ENCODE measurements at regions of chr12 and their contacts with region 1.

Region 1: GRCh38 chr12:62435303-62436163 is 31.1 kb upstream of the MON2 start:
- DNase-seq: peak; percentile 32
- H3K4me3 Mint-ChIP-seq: peak overlapping the region; percentile 71
- H3K27ac Mint-ChIP-seq: no peak overlapping the region
- H3K4me1 Mint-ChIP-seq: peaks cover 20% of the 10 kb centered on the region
- H3K27me3 Mint-ChIP-seq: peaks cover 21% of the 10 kb centered on the region
- CTCF ChIP-seq: no peak

Region 2: DNA sequence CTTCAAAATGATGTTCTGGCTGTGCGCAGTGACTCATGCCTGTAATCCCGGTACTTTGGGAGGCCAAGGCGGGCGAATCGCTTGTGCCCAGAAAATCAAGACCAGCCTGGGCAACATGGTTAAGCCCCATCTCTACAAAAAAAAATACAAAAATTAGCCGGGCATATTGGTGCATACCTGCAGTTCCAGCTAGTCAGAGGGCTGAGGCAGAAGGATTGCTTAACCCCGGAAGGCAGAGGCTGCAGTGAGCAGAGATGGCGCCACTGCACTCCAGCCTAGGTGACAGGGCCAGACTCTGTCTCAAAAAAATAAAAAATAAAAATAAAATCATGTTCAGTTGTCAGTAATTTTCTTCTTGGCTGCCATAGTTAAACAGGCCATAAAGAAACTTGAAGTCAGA is 421.2 kb before region 1 on chr12:
- CTCF ChIA-PET with region 1: no interaction called
- POLR2A ChIA-PET with region 1: no interaction called
- intact Hi-C with region 1: no loop called
- DNase-seq: no peak
- H3K4me3 Mint-ChIP-seq: no peak overlapping the region
- H3K27ac Mint-ChIP-seq: no peak overlapping the region
- H3K4me1 Mint-ChIP-seq: no peaks in the 10 kb centered on the region
- H3K27me3 Mint-ChIP-seq: no peaks in the 10 kb centered on the region
- CTCF ChIP-seq: no peak

Region 3: GRCh38 chr12:62128175-62128975 is 307.2 kb before region 1 on chr12:
- CTCF ChIA-PET with region 1: no interaction called
- POLR2A ChIA-PET with region 1: no interaction called
- intact Hi-C with region 1: no loop called
- DNase-seq: no peak
- H3K4me3 Mint-ChIP-seq: no peak overlapping the region
- H3K27ac Mint-ChIP-seq: no peak overlapping the region
- H3K4me1 Mint-ChIP-seq: no peaks in the 10 kb centered on the region
- H3K27me3 Mint-ChIP-seq: no peaks in the 10 kb centered on the region
- CTCF ChIP-seq: no peak

Region 4: DNA sequence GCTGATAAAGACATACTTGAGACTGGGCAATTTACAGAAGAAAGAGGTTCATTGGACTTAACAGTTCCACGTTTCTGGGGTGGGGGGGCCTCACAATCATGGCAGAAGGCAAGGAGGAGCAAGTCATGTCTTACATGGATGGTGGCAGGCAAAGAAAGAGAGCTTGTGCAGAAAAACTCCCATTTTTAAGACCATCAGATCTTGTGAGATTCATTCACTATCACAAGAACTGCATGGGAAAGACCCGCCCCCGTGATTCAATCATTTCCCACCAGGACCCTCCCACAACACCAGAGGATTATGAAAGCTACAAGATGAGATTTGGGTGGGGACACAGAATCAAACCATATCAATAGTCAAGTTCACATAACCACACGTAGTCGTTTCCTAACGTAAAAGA is 89.9 kb before region 1 on chr12:
- CTCF ChIA-PET with region 1: no interaction called
- POLR2A ChIA-PET with region 1: no interaction called
- intact Hi-C with region 1: no loop called
- DNase-seq: no peak
- H3K4me3 Mint-ChIP-seq: no peak overlapping the region
- H3K27ac Mint-ChIP-seq: no peak overlapping the region
- H3K4me1 Mint-ChIP-seq: no peaks in the 10 kb centered on the region
- H3K27me3 Mint-ChIP-seq: no peaks in the 10 kb centered on the region
- CTCF ChIP-seq: no peak

Region 5: GRCh38 chr12:62414180-62414579 is 21.4 kb before region 1 on chr12:
- CTCF ChIA-PET with region 1: interaction called, 14 read pairs
- POLR2A ChIA-PET with region 1: interaction called, 3 read pairs
- intact Hi-C with region 1: no loop called
- DNase-seq: no peak
- H3K4me3 Mint-ChIP-seq: no peak overlapping the region
- H3K27ac Mint-ChIP-seq: no peak overlapping the region
- H3K4me1 Mint-ChIP-seq: no peaks in the 10 kb centered on the region
- H3K27me3 Mint-ChIP-seq: no peaks in the 10 kb centered on the region
- CTCF ChIP-seq: no peak

Region 6: GRCh38 chr12:62466594-62467491 is 31.3 kb after region 1 on chr12 and contains the start of gene MON2:
- CTCF ChIA-PET with region 1: interaction called, 28 read pairs
- POLR2A ChIA-PET with region 1: interaction called, 6 read pairs
- intact Hi-C with region 1: no loop called
- DNase-seq: peak; percentile 85
- H3K4me3 Mint-ChIP-seq: peak within 1 kb of the TSS; percentile 81
- H3K27ac Mint-ChIP-seq: peak within 1 kb of the TSS; percentile 93
- H3K4me1 Mint-ChIP-seq: peaks cover 10% of the 10 kb centered on the region
- H3K27me3 Mint-ChIP-seq: no peaks in the 10 kb centered on the region
- CTCF ChIP-seq: no peak
- total RNA-seq, gene MON2: 49.5 and 57.4 TPM in 2 replicates

Region 7: GRCh38 chr12:62537551-62537950 is 102.0 kb after region 1 on chr12:
- CTCF ChIA-PET with region 1: interaction called, 12 read pairs
- POLR2A ChIA-PET with region 1: no interaction called
- intact Hi-C with region 1: no loop called
- DNase-seq: peak; percentile 80
- H3K4me3 Mint-ChIP-seq: no peak overlapping the region
- H3K27ac Mint-ChIP-seq: no peak overlapping the region
- H3K4me1 Mint-ChIP-seq: peaks cover 6% of the 10 kb centered on the region
- H3K27me3 Mint-ChIP-seq: no peaks in the 10 kb centered on the region
- CTCF ChIP-seq: no peak

Region 8: GRCh38 chr12:62640910-62641448 is 205.4 kb after region 1 on chr12:
- CTCF ChIA-PET with region 1: no interaction called
- POLR2A ChIA-PET with region 1: no interaction called
- intact Hi-C with region 1: no loop called
- DNase-seq: no peak
- H3K4me3 Mint-ChIP-seq: no peak overlapping the region
- H3K27ac Mint-ChIP-seq: no peak overlapping the region
- H3K4me1 Mint-ChIP-seq: peaks cover 7% of the 10 kb centered on the region
- H3K27me3 Mint-ChIP-seq: no peaks in the 10 kb centered on the region
- CTCF ChIP-seq: no peak

Region 9: DNA sequence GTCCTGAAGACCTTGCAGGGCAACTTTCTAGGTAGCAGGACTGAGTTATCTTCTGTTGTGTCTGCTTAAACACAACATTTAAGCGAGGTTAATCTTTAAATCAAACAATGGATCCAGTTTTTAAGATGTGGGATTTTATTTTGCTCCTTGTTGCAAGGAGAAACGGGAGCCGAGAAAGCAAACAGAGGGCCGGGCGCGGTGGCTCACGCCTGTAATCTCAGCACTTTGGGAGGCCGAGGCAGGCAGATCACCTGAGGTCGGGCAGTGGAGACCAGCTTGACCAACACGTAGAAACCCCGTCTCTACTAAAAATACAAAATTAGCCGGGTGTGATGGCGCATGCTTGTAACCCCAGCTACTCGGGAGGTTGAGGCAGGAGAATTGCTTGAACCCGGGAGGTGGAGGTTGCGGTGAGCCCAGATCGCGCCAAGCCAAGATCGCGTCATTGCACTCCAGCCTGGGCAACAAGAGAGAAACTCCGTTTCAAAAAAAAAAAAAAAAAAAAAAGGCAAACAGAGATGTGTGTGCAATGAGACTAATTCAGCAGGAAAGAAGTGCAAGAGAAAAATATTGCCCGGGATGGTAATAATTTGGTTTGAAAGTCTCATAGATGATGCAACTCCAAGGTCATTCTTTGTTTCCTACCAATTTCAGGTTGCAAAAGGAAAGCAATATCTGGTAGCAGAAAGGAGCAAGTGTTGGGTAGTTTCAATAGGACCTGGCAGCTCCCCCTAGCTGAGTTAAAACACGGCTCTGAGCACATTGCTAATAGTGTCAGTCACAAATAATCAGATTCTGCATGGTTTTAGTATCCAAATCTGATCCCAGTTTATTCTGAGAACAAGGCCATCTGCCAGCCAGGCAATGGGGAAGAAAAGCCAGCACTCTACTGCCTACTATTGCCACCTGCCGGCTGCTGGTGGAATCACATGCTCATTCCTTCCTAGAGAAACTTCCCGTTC is 358.0 kb after region 1 on chr12:
- CTCF ChIA-PET with region 1: interaction called, 96 read pairs
- POLR2A ChIA-PET with region 1: interaction called, 3 read pairs
- intact Hi-C with region 1: loop called (anchors 1 kb)
- DNase-seq: peak; percentile 88
- H3K4me3 Mint-ChIP-seq: no peak overlapping the region
- H3K27ac Mint-ChIP-seq: no peak overlapping the region
- H3K4me1 Mint-ChIP-seq: no peaks in the 10 kb centered on the region
- H3K27me3 Mint-ChIP-seq: no peaks in the 10 kb centered on the region
- CTCF ChIP-seq: peak; percentile 91

Region 10: GRCh38 chr12:62813031-62813829 is 377.7 kb after region 1 on chr12:
- CTCF ChIA-PET with region 1: interaction called, 24 read pairs
- POLR2A ChIA-PET with region 1: interaction called, 3 read pairs
- intact Hi-C with region 1: loop called (anchors 1 kb)
- DNase-seq: peak; percentile 76
- H3K4me3 Mint-ChIP-seq: no peak overlapping the region
- H3K27ac Mint-ChIP-seq: no peak overlapping the region
- H3K4me1 Mint-ChIP-seq: peaks cover 7% of the 10 kb centered on the region
- H3K27me3 Mint-ChIP-seq: no peaks in the 10 kb centered on the region
- CTCF ChIP-seq: peak; percentile 50